ENCODE measurements at regions of chr10 and their contacts with region 1.

Region 1: DNA sequence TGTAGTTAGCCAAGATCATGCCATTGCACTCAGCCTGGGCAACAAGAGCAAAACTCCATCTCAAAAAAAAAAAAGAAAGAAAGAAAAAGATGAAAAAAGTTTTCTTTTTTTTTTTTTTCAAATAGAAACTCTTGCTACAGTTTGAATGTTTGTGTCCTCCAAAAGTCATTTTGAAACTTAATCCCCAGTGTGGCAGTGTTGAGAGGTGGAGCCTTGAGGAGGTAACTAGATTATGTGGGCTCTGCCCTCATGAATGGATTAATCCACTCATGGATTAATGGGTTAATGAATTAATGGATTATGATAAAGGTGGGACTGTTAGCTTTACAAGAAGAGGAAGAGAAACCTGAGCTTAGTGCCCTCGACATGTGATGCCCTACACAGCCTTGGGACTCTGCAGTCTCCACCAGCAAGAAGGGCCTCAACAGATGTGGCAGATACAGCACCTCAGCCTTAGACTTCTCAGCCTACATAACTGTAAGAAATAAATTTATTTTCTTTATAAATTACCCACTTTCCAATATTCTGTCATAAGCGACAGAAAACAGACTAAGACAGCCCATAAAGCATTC is 25.1 kb downstream of the CPEB3 start:
- DNase-seq: no peak
- H3K4me3 ChIP-seq: no peak overlapping the region
- H3K27ac ChIP-seq: no peak overlapping the region
- H3K4me1 ChIP-seq: no peaks in the 10 kb centered on the region
- H3K27me3 ChIP-seq: no peaks in the 10 kb centered on the region
- CTCF ChIP-seq: no peak
- POLR2A ChIP-seq: no peak

Region 2: DNA sequence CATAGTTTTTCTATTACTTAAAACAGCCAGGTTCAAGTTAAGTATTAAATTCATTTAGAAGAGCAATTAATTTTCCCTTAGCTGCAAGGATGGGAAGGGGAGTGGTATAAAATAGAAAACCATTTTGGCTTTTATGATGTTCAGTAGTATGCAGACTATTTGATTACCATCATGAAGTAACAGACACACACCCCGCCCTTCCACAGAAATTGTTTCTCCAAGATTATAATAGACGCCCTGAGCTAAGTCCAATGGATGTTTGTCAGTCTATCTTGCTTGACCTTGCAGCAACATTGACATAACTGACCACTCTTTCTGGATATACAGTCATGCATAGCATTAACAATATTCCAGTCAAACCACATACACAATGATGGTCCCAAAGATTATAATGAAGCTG is 17.2 kb before region 1 on chr10:
- CTCF ChIA-PET with region 1: interaction called, 12 read pairs
- POLR2A ChIA-PET with region 1: no interaction called
- dilution Hi-C with region 1: no loop called
- intact Hi-C with region 1: no loop called
- DNase-seq: no peak
- H3K4me3 ChIP-seq: no peak overlapping the region
- H3K27ac ChIP-seq: no peak overlapping the region
- H3K4me1 ChIP-seq: no peaks in the 10 kb centered on the region
- H3K27me3 ChIP-seq: no peaks in the 10 kb centered on the region
- CTCF ChIP-seq: no peak
- POLR2A ChIP-seq: no peak

Region 3: GRCh38 chr10:92664322-92664721 is 398.5 kb after region 1 on chr10:
- CTCF ChIA-PET with region 1: no interaction called
- POLR2A ChIA-PET with region 1: no interaction called
- dilution Hi-C with region 1: no loop called
- intact Hi-C with region 1: no loop called
- DNase-seq: no peak
- H3K4me3 ChIP-seq: no peak overlapping the region
- H3K27ac ChIP-seq: no peak overlapping the region
- H3K4me1 ChIP-seq: no peaks in the 10 kb centered on the region
- H3K27me3 ChIP-seq: no peaks in the 10 kb centered on the region
- CTCF ChIP-seq: no peak
- POLR2A ChIP-seq: no peak

Measured in endothelial cell of umbilical vein (primary cell).